Tibial artery (tissue), 4 donors: ENCODE measurements at regions of chr6 and their contacts with region 1.

Region 1: DNA sequence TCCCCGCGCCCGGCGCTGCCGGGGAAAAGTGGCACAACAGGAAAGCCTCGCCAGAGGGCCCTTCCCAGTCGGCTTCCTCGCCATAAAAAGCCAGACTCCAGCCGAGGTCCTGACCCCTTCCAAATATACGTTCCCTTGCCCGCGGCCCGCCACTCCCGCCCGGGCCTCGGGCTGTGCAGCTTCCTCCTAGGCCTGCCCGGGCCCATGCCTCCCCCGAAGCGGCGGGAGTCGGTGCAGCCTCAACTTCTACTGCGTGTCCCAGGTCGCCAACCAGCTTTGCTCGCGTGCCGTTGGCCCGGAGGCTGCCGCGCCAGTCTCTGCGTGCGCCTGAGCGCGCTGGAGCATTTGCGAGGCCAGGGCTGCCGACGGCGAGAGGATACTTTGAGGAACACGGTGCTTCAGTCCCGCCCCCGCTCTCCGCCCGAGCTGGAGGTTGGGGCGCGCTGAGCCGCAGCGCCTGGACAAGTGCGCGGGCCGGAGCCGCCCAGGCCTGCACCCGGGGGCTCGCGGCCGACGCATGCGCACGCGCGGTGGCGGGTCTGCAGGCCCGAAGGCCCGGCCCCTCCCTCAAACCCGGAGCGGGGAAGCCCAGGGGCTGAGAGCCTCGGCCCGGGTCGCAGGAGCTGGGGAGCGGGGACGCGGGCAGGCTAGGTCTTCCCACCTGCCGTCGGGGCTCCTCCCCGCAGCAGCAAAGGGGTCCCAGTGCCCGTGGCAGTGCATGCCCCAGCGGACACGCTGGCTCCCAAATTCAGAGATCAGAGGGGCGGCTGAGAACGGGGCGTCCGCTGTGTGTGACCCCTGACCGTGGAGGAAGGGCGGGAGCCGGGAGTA is 10.2 kb downstream of the FOXC1 start:
- DNase-seq: peak; percentile 47 to 86
- H3K4me3 ChIP-seq: peak overlapping the region; percentile 91 to 93
- H3K27ac ChIP-seq: peak overlapping the region; percentile 91 to 98
- H3K4me1 ChIP-seq: peaks cover 0 to 51% (median 27%) of the 10 kb centered on the region in 4 donors
- H3K27me3 ChIP-seq: no peaks in the 10 kb centered on the region
- CTCF ChIP-seq: no peak

Region 2: DNA sequence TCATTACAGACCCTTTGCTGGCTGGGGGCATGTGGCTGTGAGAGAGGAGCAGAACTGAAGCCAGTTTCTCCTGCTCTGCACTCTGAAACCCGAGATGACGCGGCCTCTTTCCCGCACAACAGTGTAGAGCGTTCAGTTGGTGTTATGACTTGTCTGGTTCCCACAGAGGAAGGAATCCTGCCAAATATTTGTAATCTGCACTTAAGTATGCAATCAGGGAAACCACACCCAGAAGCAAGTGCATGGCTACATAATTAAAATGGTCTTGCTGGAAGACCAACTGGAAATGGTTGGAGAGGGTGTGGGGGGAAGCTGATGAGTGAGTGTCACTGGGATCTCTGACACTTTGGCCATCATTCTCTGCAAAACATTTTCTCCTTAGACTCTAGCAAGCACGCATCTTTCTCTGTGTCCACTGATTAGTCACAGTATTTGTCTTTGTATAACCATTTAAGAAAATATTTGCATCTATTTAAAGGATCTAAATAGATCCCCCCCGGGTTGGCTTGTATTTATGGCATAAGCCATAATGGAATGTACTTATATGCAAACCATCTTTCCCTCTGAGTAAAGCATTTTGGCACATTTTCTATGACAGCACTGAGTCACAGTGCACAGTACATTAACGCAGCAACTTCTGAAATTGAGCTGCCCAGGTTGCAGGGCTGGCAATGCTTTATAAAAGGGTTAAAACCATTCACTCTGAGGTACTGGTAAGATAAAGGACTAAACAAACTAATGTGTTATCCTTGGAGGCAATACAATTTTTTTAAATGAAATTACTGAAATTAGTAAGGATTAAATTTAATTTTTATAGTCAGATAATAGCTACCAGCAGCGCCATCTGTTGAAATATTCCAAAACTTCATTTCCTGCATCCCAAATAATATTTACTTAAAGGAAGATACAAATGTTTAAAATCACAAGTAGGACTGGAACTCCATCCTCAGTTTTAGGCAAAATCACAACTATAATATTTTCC is 66.5 kb after region 1 on chr6:
- intact Hi-C with region 1: loop called (anchors 5 kb)
- DNase-seq: peak in 1 of 2 donors; percentile 44
- H3K4me3 ChIP-seq: peak overlapping the region in 1 of 2 donors; percentile 8
- H3K27ac ChIP-seq: peak overlapping the region; percentile 60 to 66
- H3K4me1 ChIP-seq: peaks cover 0 to 23% (median 13%) of the 10 kb centered on the region in 4 donors
- H3K27me3 ChIP-seq: no peaks in the 10 kb centered on the region
- CTCF ChIP-seq: peak; percentile 29 to 34

Region 3: GRCh38 chr6:1901556-1901955 is 281.7 kb after region 1 on chr6:
- intact Hi-C with region 1: loop called (anchors 5 kb)
- DNase-seq: no peak
- H3K4me3 ChIP-seq: no peak overlapping the region
- H3K27ac ChIP-seq: peak overlapping the region; percentile 87 to 89
- H3K4me1 ChIP-seq: peaks cover 0 to 63% (median 25%) of the 10 kb centered on the region in 4 donors
- H3K27me3 ChIP-seq: no peaks in the 10 kb centered on the region
- CTCF ChIP-seq: no peak

Region 4: DNA sequence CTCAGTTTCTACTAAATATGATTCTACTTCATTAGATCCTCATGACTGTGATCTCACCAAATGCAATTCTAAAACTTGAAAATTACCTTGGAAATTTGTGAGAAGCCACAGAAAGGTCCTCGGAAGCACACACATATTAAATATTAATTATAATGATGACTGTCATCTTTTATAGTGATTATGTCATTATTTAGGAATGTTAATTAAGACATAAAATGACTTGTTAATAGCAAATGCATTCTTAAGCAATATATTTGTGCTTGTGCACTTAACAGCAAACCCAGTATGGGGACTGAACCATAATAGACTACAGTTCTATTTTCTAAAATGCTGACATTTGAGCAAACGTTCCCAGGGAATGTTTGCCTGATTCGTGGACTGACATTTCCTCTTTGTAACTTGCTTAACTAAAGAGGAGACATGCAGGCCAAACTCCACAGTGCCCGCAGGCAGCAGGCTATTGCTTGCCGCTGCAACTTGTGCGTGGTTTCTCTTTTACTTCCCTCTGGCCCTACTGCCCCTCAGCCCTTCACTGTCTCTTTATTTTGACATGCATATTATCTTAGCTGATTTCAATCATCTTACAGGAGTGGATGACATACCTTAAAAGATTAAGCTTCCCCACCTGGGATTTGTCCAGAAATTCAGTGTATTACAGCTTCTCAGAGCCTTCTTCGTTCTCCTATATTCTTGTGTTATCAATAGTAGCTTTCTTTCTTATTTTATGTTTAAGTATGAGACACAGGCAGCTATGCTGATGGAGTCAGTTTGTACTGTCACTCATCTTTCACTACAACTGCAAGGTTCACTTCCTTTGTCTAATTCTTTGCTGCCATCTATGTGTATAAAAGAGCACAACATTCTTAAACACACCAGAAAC is 484.0 kb after region 1 on chr6:
- intact Hi-C with region 1: loop called (anchors 2 kb)
- DNase-seq: peak; percentile 39 to 75
- H3K4me3 ChIP-seq: peak overlapping the region; percentile 46 to 51
- H3K27ac ChIP-seq: peak overlapping the region; percentile 60 to 85
- H3K4me1 ChIP-seq: peaks cover 0 to 31% (median 2%) of the 10 kb centered on the region in 4 donors
- H3K27me3 ChIP-seq: no peaks in the 10 kb centered on the region
- CTCF ChIP-seq: peak; percentile 54 to 67